Activated CD4-positive, alpha-beta T cell treated with anti-CD3 and anti-CD28 coated beads, Interleukin-2, amount 10 ng/mL, durations not matched to agents 24 days and 14 days (primary cell): ENCODE measurements at regions of chr5 and their contacts with region 1.

Region 1: DNA sequence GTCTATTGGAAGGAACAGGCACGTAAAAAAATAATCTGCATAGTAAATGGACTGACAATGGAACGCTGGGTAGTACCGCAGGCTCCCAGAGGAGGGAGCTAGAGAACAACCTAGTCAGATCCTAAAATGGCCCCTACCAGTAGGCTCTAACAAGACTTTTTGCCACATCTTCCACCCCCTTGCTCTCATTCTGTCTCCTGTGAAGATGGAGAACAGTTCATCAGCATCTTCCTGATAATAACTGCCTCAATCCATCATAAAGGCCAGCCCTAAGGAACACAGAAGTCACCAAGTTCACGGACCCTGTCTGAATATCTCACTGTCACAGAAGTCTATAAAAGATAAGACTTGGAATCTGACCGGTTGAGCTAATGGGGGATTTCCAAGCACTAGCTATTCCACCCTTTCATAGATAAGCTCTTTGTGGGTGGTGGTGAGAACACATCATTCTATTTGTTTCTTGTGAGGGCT is 133.4 kb downstream of the SLC1A3 start:
- DNase-seq: peak; percentile 91
- H3K4me3 Mint-ChIP-seq: no peak overlapping the region
- H3K27ac Mint-ChIP-seq: no peak overlapping the region
- H3K4me1 Mint-ChIP-seq: peaks cover 11% of the 10 kb centered on the region
- H3K27me3 Mint-ChIP-seq: peaks cover 29% of the 10 kb centered on the region

Region 2: DNA sequence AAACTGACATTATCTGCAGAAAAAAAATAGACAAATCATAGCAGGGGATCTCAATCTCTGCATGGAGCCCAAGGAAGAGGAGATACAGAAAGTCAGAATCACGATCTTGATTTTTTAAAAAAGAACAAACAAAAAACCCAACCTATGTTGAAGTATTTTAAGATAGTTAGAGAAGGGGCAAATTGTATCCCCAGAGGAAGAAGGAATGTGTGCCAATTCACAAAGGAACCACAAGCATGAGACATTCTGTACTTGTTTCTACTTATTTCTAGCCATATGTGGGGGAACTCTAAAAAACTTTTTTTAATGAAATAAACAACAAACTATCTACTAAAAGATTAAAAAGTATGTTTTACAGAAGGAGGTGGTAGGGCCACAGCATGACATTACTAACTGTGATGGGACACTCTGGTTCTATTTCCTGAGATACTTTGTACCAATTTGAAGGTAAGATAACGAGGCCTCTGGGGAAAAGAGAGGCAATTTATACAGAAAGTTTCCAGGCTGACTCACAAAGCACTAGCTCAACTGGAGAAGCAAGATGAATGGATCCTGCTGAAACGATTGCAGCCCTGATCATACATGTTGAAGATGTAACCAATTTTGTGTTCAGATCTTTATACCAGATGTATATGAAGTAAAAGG is 460.6 kb before region 1 on chr5:
- intact Hi-C with region 1: no loop called
- DNase-seq: no peak
- H3K4me3 Mint-ChIP-seq: no peak overlapping the region
- H3K27ac Mint-ChIP-seq: no peak overlapping the region
- H3K4me1 Mint-ChIP-seq: no peaks in the 10 kb centered on the region
- H3K27me3 Mint-ChIP-seq: peaks cover 26% of the 10 kb centered on the region

Region 3: DNA sequence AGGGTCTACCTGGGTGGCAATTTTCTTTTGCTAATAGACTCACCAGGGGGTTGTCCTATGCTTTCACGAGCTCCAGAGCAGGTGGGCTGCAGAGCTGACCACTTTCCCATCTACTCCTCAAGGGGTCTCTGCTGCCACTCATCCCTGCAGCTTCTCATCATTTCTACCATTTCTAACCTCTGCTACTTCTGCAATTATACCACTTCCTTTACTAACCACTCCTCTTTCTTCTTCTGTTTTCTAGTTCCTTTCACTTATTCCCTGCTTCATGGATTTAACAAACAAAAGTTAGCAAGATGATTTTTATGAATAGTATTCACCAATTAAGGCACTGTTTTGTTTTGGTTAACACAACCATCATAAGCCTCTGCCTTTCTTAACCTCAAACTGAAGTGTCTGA is 102.3 kb after region 1 on chr5:
- intact Hi-C with region 1: no loop called
- DNase-seq: no peak
- H3K4me3 Mint-ChIP-seq: no peak overlapping the region
- H3K27ac Mint-ChIP-seq: no peak overlapping the region
- H3K4me1 Mint-ChIP-seq: peaks cover 5% of the 10 kb centered on the region
- H3K27me3 Mint-ChIP-seq: peaks cover 25% of the 10 kb centered on the region

Region 4: GRCh38 chr5:36870399-36871040 is 130.7 kb after region 1 on chr5:
- intact Hi-C with region 1: loop called (anchors 1 kb)
- DNase-seq: peak; percentile 70
- H3K4me3 Mint-ChIP-seq: no peak overlapping the region
- H3K27ac Mint-ChIP-seq: no peak overlapping the region
- H3K4me1 Mint-ChIP-seq: peaks cover 24% of the 10 kb centered on the region
- H3K27me3 Mint-ChIP-seq: no peaks in the 10 kb centered on the region

Region 5: GRCh38 chr5:36944607-36945225 is 204.9 kb after region 1 on chr5:
- intact Hi-C with region 1: loop called (anchors 2 kb)
- DNase-seq: no peak
- H3K4me3 Mint-ChIP-seq: no peak overlapping the region
- H3K27ac Mint-ChIP-seq: no peak overlapping the region
- H3K4me1 Mint-ChIP-seq: peaks cover 7% of the 10 kb centered on the region
- H3K27me3 Mint-ChIP-seq: no peaks in the 10 kb centered on the region

Region 6: GRCh38 chr5:37005946-37006540 is 266.3 kb after region 1 on chr5:
- intact Hi-C with region 1: loop called (anchors 2 kb)
- DNase-seq: no peak
- H3K4me3 Mint-ChIP-seq: no peak overlapping the region
- H3K27ac Mint-ChIP-seq: no peak overlapping the region
- H3K4me1 Mint-ChIP-seq: no peaks in the 10 kb centered on the region
- H3K27me3 Mint-ChIP-seq: no peaks in the 10 kb centered on the region